ENCODE measurements at regions of chr4 and their contacts with region 1.

Region 1: GRCh38 chr4:133320576-133321170 is 171.6 kb downstream of the PCDH10 start:
- DNase-seq: peak; percentile 6
- H3K4me3 Mint-ChIP-seq: no peak overlapping the region
- H3K27ac Mint-ChIP-seq: no peak overlapping the region
- H3K4me1 Mint-ChIP-seq: no peaks in the 10 kb centered on the region
- H3K27me3 Mint-ChIP-seq: no peaks in the 10 kb centered on the region
- CTCF ChIP-seq: peak; percentile 39

Region 2: DNA sequence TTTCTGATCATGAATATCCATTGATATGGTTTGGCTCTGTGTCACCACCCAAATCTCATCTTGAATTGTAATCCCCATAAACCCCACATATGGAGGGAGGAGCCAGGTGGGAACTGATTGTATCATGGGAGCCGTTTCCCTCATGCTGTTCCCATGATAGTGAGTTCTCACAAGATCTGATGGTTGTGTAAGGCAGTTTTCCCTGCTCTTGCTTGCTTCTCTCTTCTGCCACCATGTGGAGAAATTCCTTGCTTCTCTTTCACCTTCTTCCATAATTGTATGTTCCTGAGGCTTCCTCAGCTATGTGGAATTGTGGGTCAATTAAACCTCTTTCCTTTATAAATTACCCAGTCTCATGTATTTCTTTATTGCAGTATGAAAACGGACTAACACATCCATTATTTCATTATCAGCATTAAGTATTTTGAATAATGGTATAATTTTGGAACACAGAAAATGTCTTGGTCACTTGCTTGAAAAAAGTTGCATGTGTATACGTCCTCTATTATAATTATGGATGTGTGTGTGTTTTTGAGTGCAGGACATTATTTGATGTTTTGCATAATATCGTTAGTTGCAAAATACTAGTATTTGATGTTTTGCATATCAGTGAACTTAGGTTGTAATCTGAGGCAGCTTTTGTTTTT is 163.1 kb after region 1 on chr4:
- CTCF ChIA-PET with region 1: no interaction called
- intact Hi-C with region 1: loop called (anchors 5 kb)
- DNase-seq: peak; percentile 4
- H3K4me3 Mint-ChIP-seq: no peak overlapping the region
- H3K27ac Mint-ChIP-seq: no peak overlapping the region
- H3K4me1 Mint-ChIP-seq: no peaks in the 10 kb centered on the region
- H3K27me3 Mint-ChIP-seq: no peaks in the 10 kb centered on the region
- CTCF ChIP-seq: no peak

Region 3: GRCh38 chr4:134754301-134755019 is 1433.8 kb after region 1 on chr4:
- CTCF ChIA-PET with region 1: no interaction called
- intact Hi-C with region 1: no loop called
- DNase-seq: no peak
- H3K4me3 Mint-ChIP-seq: no peak overlapping the region
- H3K27ac Mint-ChIP-seq: no peak overlapping the region
- H3K4me1 Mint-ChIP-seq: no peaks in the 10 kb centered on the region
- H3K27me3 Mint-ChIP-seq: no peaks in the 10 kb centered on the region
- CTCF ChIP-seq: no peak

Region 4: GRCh38 chr4:134935320-134935719 is 1614.6 kb after region 1 on chr4:
- CTCF ChIA-PET with region 1: no interaction called
- intact Hi-C with region 1: loop called (anchors 10 kb)
- DNase-seq: peak; percentile 42
- H3K4me3 Mint-ChIP-seq: no peak overlapping the region
- H3K27ac Mint-ChIP-seq: no peak overlapping the region
- H3K4me1 Mint-ChIP-seq: no peaks in the 10 kb centered on the region
- H3K27me3 Mint-ChIP-seq: no peaks in the 10 kb centered on the region
- CTCF ChIP-seq: no peak

Measured in Calu3 (cell line).